ENCODE measurements at regions of chr1 and their contacts with region 1.

Region 1: DNA sequence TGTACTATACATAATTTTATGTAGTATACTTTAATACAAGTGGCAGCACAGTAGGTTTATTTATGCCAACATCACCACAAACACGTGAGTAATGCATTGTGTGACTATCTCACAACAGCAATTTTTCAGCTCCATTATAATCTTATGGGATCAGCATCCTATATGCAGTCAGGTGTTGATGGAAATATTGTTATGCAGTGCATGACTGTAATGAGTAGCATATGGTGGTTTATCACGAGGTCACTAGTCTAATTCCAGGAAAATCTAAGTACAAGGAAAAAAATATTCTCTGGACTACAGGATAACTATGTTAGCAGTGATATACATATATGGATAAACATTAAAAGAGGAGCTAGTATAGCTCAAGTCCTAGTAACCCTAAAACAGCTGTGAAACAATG is 69.0 kb downstream of the ATP1B1 start:
- DNase-seq: no peak
- H3K4me3 ChIP-seq: no peak overlapping the region
- H3K27ac ChIP-seq: no peak overlapping the region
- H3K4me1 ChIP-seq: no peaks in the 10 kb centered on the region
- H3K27me3 ChIP-seq: no peaks in the 10 kb centered on the region
- CTCF ChIP-seq: no peak
- EP300 ChIP-seq: no peak
- POLR2A ChIP-seq: no peak

Region 2: GRCh38 chr1:169115891-169116585 is 59.4 kb before region 1 on chr1:
- in situ Hi-C with region 1: no loop called
- intact Hi-C with region 1: no loop called
- DNase-seq: peak; percentile 80
- H3K4me3 ChIP-seq: peak overlapping the region in 1 of 4 donors; percentile 15
- H3K27ac ChIP-seq: peak overlapping the region; percentile 71 to 98 (median 96)
- H3K4me1 ChIP-seq: peaks cover 41 to 96% (median 75%) of the 10 kb centered on the region in 4 donors
- H3K27me3 ChIP-seq: no peaks in the 10 kb centered on the region
- CTCF ChIP-seq: no peak
- EP300 ChIP-seq: no peak
- POLR2A ChIP-seq: peak; percentile 32

Region 3: DNA sequence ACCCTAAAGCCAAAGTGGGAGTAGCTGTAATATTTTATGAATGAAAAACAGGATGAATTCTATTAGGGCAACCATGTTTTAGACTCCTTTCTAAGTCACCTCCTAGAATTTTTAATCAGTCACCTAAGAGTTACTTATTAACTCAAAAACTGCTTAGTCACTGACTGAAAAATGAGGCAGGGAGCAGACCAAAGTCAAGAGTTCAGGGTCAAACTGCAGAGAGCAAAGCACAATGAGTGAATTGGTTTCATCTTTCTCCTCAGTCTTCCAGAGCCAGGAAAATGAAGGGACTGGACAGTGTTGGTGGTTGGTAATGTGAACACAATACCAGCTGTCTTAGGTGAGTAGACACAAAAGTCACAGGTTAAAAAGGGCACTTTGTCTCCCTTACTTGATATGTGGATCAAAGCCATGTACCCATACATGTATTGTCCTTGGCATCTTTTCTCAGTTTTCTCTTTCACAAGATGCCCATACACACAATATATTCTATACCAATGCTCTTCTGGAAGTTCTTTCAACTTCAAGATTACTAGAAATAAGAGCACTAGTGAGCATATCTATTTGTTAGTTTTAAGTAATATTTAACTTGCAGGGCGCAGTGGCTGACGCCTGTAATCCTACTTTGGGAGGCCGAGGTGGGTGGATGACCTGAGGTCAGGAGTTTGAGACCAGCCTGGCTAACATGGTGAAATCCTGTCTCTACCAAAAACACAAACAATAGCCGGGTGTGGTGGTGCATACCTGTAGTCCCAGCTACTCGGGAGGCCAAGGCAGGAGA is 26.8 kb before region 1 on chr1:
- in situ Hi-C with region 1: no loop called
- intact Hi-C with region 1: no loop called
- DNase-seq: peak; percentile 23
- H3K4me3 ChIP-seq: no peak overlapping the region
- H3K27ac ChIP-seq: peak overlapping the region; percentile 16 to 37 (median 22)
- H3K4me1 ChIP-seq: peaks cover 0 to 35% (median 24%) of the 10 kb centered on the region in 4 donors
- H3K27me3 ChIP-seq: no peaks in the 10 kb centered on the region
- CTCF ChIP-seq: no peak
- EP300 ChIP-seq: no peak
- POLR2A ChIP-seq: no peak

Region 4: DNA sequence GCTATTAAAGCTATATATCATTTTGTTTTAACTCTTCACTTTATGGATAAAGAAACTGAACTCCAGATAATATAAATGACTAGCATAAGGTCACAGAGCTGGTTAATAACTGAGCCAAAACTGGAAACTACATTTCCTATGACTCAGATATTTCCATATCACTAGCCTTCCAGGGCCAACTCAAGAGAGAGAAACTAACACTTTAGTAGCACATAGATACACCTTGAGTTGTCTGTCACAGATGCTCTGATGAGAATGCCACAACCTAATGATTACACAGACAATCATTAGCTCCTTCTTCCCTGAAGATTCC is 151.5 kb after region 1 on chr1:
- in situ Hi-C with region 1: loop called in 1 of 4 experiments (anchors 10 kb)
- intact Hi-C with region 1: no loop called
- DNase-seq: no peak
- H3K4me3 ChIP-seq: no peak overlapping the region
- H3K27ac ChIP-seq: no peak overlapping the region
- H3K4me1 ChIP-seq: no peaks in the 10 kb centered on the region
- H3K27me3 ChIP-seq: no peaks in the 10 kb centered on the region
- CTCF ChIP-seq: no peak
- EP300 ChIP-seq: no peak
- POLR2A ChIP-seq: no peak

Region 5: GRCh38 chr1:169491845-169492281 is 316.4 kb after region 1 on chr1:
- in situ Hi-C with region 1: no loop called
- intact Hi-C with region 1: no loop called
- DNase-seq: no peak
- H3K4me3 ChIP-seq: no peak overlapping the region
- H3K27ac ChIP-seq: no peak overlapping the region
- H3K4me1 ChIP-seq: peaks cover 0 to 9% (median 5%) of the 10 kb centered on the region in 4 donors
- H3K27me3 ChIP-seq: no peaks in the 10 kb centered on the region
- CTCF ChIP-seq: no peak
- EP300 ChIP-seq: no peak
- POLR2A ChIP-seq: no peak

Measured in transverse colon (tissue), 4 donors.